ENCODE measurements at regions of chr17 and their contacts with region 1.

Region 1: GRCh38 chr17:10754109-10754508 is 24.3 kb upstream of the TMEM220 start:
- DNase-seq: peak; percentile 42
- H3K4me3 Mint-ChIP-seq: no peak overlapping the region
- H3K27ac Mint-ChIP-seq: no peak overlapping the region
- H3K4me1 Mint-ChIP-seq: no peaks in the 10 kb centered on the region
- H3K27me3 Mint-ChIP-seq: no peaks in the 10 kb centered on the region

Region 2: DNA sequence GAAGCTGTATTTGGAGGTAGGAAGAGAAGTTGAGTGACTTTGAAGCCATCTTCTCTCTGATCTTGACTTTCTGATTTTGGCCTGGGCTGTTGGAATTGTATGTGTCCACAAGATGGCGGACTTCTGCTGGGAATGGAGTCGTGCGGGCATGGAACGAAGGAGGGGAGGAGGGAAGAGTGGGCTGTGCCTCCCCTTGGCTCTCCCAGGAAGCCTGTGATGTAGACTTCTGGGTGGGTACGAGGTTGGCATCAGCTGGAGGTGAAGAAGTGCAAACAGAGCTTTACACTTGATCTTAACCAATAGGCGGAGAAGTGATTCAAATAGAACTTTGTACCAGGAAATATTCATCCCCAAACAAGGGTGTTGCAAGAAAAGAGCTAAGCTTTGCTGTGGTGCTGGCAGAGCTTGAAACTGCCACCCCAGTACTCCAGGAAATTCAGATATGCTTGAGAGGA is 16.9 kb before region 1 on chr17:
- CTCF ChIA-PET with region 1: interaction called, 16 read pairs
- intact Hi-C with region 1: no loop called
- DNase-seq: peak; percentile 58
- H3K4me3 Mint-ChIP-seq: no peak overlapping the region
- H3K27ac Mint-ChIP-seq: no peak overlapping the region
- H3K4me1 Mint-ChIP-seq: peaks cover 20% of the 10 kb centered on the region
- H3K27me3 Mint-ChIP-seq: no peaks in the 10 kb centered on the region